A673 (cell line): ENCODE measurements at regions of chr14 and their contacts with region 1.

Region 1: DNA sequence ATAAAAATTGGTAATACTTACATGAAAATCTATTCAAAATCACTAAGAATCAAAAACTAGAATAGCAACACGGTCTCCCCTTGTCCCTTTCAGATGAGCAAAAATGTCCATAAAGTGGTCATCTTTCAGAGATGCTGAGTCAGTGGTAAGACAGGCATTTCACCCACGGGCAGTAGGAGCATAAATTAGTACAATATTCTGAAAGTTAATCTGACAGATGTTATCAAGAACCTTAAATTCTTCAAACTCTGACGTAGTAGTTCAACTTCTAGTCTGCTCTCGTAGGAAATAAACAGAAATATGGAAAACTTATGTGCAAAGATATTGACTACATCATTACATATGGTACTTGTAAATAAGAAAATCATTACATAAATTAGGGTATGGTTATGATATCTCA is 33.1 kb upstream of the GNPNAT1 start:
- DNase-seq: no peak
- H3K4me3 ChIP-seq: no peak overlapping the region
- H3K27ac ChIP-seq: no peak overlapping the region
- H3K4me1 ChIP-seq: peaks cover 13% of the 10 kb centered on the region
- H3K27me3 ChIP-seq: no peaks in the 10 kb centered on the region
- CTCF ChIP-seq: no peak

Region 2: DNA sequence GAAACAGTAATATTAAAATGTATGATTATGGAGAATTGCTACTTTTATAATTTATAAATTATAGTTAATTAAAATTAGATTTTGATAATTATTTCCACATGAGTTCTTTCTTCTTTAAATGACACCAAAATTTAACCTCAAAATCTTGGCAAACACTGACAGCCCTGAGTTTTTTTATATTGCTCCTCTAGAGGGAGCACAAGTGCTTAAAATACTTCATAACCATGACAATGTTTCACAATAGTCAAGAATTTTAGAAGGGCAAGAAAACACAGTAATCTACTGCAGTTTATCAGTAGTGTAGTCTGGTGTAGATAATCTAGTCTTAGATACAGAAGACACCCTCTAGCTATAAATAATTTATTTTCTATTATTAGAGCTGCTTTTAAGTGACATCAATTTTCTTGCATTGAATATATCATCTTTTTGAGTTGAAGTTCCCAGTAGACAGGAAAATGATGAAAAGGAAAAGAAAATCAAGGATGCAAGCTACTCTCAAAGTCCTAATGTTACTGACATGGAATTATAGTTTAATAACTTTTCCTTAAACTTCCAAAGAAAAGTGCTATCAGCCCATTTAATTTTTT is 524.7 kb before region 1 on chr14:
- CTCF ChIA-PET with region 1: no interaction called
- POLR2A ChIA-PET with region 1: no interaction called
- intact Hi-C with region 1: loop called (anchors 10 kb)
- DNase-seq: peak; percentile 64
- H3K4me3 ChIP-seq: no peak overlapping the region
- H3K27ac ChIP-seq: no peak overlapping the region
- H3K4me1 ChIP-seq: no peaks in the 10 kb centered on the region
- H3K27me3 ChIP-seq: peaks cover 7% of the 10 kb centered on the region
- CTCF ChIP-seq: peak; percentile 76

Region 3: GRCh38 chr14:52961060-52961639 is 136.6 kb after region 1 on chr14:
- CTCF ChIA-PET with region 1: interaction called, 7 read pairs
- POLR2A ChIA-PET with region 1: no interaction called
- intact Hi-C with region 1: loop called (anchors 2 kb)
- DNase-seq: peak; percentile 79
- H3K4me3 ChIP-seq: no peak overlapping the region
- H3K27ac ChIP-seq: no peak overlapping the region
- H3K4me1 ChIP-seq: no peaks in the 10 kb centered on the region
- H3K27me3 ChIP-seq: no peaks in the 10 kb centered on the region
- CTCF ChIP-seq: peak; percentile 79

Region 4: GRCh38 chr14:53055003-53055402 is 230.5 kb after region 1 on chr14:
- CTCF ChIA-PET with region 1: no interaction called
- POLR2A ChIA-PET with region 1: no interaction called
- intact Hi-C with region 1: loop called (anchors 2 kb)
- DNase-seq: peak; percentile 63
- H3K4me3 ChIP-seq: no peak overlapping the region
- H3K27ac ChIP-seq: no peak overlapping the region
- H3K4me1 ChIP-seq: no peaks in the 10 kb centered on the region
- H3K27me3 ChIP-seq: no peaks in the 10 kb centered on the region
- CTCF ChIP-seq: peak; percentile 83